Sigmoid colon (tissue), 7 donors: ENCODE measurements at regions of chr16 and their contacts with region 1.

Region 1: DNA sequence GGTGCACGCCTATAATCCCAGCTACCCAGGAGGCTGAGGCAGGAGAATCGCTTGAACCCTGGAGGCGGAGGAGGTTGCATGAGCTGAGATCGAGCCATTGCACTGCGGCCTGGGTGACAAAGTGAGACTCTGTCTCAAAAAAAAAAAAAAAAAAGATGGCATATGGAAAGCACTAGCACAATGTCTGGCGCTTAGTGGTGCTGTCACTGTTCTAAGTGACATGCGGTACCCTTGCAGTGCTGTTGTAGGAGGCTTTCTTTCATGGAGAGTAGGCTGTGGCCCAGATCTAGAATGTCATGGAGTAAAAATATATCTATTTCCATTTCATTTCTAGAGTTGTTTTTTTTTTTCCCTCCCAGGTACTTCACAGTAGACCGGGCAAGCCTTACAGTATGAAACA is 14.6 kb upstream of the METTL9 start:
- DNase-seq: no peak
- H3K4me3 ChIP-seq: no peak overlapping the region
- H3K27ac ChIP-seq: no peak overlapping the region
- H3K4me1 ChIP-seq: no peaks in the 10 kb centered on the region
- H3K27me3 ChIP-seq: no peaks in the 10 kb centered on the region
- CTCF ChIP-seq: no peak
- EP300 ChIP-seq: no peak
- POLR2A ChIP-seq: no peak

Region 2: DNA sequence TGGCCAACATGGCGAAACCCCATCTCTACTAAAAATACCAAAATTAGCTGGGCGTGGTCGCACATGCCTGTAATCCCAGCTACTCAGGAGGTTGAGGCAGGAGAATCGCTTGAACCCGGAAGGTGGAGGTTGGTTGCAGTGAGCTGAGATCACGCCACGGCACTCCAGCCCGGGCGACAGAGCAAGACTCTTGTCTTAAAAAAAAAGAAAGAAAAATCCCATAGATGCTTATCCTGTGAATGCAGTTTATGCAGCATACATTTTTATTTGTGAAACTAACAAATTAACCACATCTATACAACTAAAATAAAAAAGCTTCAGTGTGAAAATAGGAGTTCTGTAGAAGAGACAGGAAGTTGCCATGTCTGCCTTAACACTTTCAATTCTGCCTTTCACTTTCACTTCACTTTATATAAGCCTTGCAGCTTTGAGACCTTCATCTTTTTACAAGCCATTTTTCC is 60.5 kb after region 1 on chr16:
- intact Hi-C with region 1: loop called (anchors 1 kb)
- DNase-seq: no peak
- H3K4me3 ChIP-seq: peak overlapping the region in 3 of 4 donors; percentile 23 to 33 (median 30)
- H3K27ac ChIP-seq: peak overlapping the region; percentile 49 to 55 (median 50)
- H3K4me1 ChIP-seq: peaks cover 0 to 25% (median 8%) of the 10 kb centered on the region in 4 donors
- H3K27me3 ChIP-seq: no peaks in the 10 kb centered on the region
- CTCF ChIP-seq: no peak
- EP300 ChIP-seq: no peak
- POLR2A ChIP-seq: no peak

Region 3: GRCh38 chr16:21708533-21709115 is 123.8 kb after region 1 on chr16:
- intact Hi-C with region 1: loop called (anchors 2 kb)
- DNase-seq: peak; percentile 77
- H3K4me3 ChIP-seq: no peak overlapping the region
- H3K27ac ChIP-seq: no peak overlapping the region
- H3K4me1 ChIP-seq: peaks cover 0 to 5% (median 2%) of the 10 kb centered on the region in 4 donors
- H3K27me3 ChIP-seq: peaks cover 0 to 6% (median 0%) of the 10 kb centered on the region in 3 donors
- CTCF ChIP-seq: peak; percentile 21 to 77 (median 60)
- EP300 ChIP-seq: no peak
- POLR2A ChIP-seq: no peak